ENCODE measurements at regions of chr3 and their contacts with region 1.

Region 1: DNA sequence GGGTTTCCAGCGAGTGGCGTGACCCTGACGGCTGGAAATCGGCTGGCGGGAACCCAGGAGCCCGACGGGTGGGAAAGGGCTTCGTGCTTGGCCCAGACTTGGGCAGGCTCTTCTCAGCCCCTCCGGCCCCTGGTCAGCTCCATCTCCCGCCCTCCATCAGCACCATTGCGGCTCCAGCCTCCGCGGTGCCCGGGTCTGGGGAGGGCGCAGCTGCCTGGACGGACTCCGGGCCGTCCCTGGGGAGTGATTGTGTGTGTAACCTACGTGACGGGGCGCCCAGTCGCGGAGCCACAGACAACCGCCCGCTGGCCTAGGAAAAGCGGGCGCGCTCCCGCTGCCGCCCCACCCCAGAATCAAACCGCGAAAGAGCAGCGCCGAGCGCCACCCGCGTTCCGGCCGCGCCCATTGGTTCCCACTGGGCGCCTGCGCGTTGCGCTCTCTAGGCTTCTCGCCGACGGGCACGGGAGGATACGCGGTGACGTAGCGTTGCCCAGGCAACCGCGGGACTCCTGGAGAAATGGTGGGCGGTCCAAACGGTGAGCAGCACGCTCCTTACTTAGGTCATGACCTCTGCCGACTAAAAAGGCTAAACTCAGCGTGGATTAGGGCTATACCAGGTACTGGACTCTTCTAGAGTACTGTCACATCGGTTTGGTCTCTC is at the start of gene CFAP20DC:
- DNase-seq: peak; percentile 96
- H3K4me3 ChIP-seq: peak within 1 kb of the TSS; percentile 49 to 87 (median 63)
- H3K27ac ChIP-seq: peak within 1 kb of the TSS; percentile 95
- H3K4me1 ChIP-seq: peaks cover 15% of the 10 kb centered on the region
- H3K27me3 ChIP-seq: no peaks in the 10 kb centered on the region
- CTCF ChIP-seq: peak in 1 of 2 donors; percentile 2
- total RNA-seq, gene CFAP20DC: 3.0 to 9.9 TPM

Region 2: DNA sequence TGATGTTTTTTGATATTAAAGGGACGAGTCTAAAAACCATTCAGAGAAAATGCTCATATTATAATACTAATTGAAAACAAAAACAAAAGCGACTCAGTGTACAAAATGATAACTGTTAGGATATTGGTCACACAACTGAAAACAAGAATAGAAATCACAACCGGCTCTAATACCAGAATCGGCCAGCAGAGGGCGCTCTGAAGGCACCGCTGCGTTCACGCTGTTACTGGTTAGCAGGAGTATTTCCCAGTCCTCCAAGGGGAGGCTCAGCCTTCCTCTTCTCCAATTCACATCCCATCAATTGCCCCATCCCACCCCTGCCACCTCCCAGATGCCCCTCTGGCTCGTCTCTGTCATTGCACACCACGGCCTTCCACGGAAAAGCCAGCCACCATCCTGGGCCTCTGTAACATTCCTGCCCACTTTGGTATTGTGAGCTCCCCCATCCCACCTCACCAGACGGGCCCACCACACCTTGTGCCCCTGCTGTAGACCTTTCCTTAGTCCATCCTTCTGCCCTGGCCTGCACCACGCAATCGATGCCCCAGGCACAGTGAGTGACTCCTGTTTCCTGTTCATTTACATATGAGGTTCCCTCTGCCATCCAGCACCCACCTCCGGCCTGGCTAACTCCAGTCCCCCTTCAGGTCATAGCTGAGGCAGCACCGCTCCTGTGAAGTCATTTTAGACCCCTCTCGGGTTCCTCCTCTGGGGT is 481.1 kb before region 1 on chr3:
- CTCF ChIA-PET with region 1: no interaction called
- dilution Hi-C with region 1: no loop called
- in situ Hi-C with region 1: no loop called
- intact Hi-C with region 1: loop called (anchors 5 kb)
- DNase-seq: peak; percentile 45
- H3K4me3 ChIP-seq: no peak overlapping the region
- H3K27ac ChIP-seq: no peak overlapping the region
- H3K4me1 ChIP-seq: peaks cover 21% of the 10 kb centered on the region
- H3K27me3 ChIP-seq: no peaks in the 10 kb centered on the region
- CTCF ChIP-seq: peak; percentile 87 to 88

Region 3: DNA sequence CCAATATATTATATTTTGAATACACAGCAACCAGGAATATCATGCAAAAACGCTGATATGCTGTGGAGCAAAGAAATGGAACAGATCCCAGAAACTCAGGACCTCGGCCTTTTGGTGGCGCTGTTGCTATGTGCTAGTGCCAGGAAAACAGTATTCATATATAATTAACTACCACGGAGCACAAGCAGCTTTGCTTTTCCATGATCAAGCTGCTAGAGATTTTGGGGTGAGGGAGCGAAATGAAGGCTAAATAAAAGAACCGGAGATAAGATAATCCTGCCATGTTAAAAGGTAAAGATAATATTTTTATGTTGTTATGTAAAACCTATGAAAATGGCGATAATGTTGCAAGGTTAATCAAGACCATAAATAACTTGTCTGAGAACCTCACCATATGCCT is 225.5 kb before region 1 on chr3:
- CTCF ChIA-PET with region 1: interaction called, 3 read pairs
- dilution Hi-C with region 1: no loop called
- in situ Hi-C with region 1: loop called in 1 of 2 experiments (anchors 5 kb)
- intact Hi-C with region 1: loop called (anchors 2 kb)
- DNase-seq: peak; percentile 64
- H3K4me3 ChIP-seq: no peak overlapping the region
- H3K27ac ChIP-seq: no peak overlapping the region
- H3K4me1 ChIP-seq: peaks cover 5% of the 10 kb centered on the region
- H3K27me3 ChIP-seq: no peaks in the 10 kb centered on the region
- CTCF ChIP-seq: peak; percentile 85 to 86

Region 4: DNA sequence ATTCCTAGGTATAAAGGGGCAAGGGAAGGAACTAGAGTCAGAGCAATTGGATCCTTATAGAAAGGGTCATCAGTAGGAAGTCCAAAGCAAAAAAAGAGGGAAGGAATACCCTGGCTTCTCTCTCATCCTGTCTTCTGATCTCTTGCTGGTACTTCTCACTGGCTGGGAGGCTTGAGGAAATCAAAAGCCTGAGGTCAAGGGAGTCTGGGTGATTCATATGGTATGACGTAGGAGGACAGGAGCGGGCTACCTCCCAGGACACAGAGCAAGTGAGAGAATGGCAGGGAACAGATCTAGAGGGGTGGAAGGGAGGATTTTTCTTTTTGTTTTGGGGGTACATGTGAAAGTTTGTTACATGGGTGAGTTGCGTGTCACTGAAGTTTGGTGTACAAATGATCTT is 76.0 kb before region 1 on chr3:
- CTCF ChIA-PET with region 1: no interaction called
- dilution Hi-C with region 1: no loop called
- in situ Hi-C with region 1: no loop called
- intact Hi-C with region 1: no loop called
- DNase-seq: no peak
- H3K4me3 ChIP-seq: no peak overlapping the region
- H3K27ac ChIP-seq: no peak overlapping the region
- H3K4me1 ChIP-seq: no peaks in the 10 kb centered on the region
- H3K27me3 ChIP-seq: no peaks in the 10 kb centered on the region
- CTCF ChIP-seq: no peak

Region 5: GRCh38 chr3:59006634-59007517 is 42.9 kb before region 1 on chr3:
- CTCF ChIA-PET with region 1: no interaction called
- dilution Hi-C with region 1: loop called (anchors 5 kb)
- in situ Hi-C with region 1: no loop called
- intact Hi-C with region 1: no loop called
- DNase-seq: peak; percentile 22
- H3K4me3 ChIP-seq: no peak overlapping the region
- H3K27ac ChIP-seq: no peak overlapping the region
- H3K4me1 ChIP-seq: no peaks in the 10 kb centered on the region
- H3K27me3 ChIP-seq: no peaks in the 10 kb centered on the region
- CTCF ChIP-seq: no peak

Region 6: DNA sequence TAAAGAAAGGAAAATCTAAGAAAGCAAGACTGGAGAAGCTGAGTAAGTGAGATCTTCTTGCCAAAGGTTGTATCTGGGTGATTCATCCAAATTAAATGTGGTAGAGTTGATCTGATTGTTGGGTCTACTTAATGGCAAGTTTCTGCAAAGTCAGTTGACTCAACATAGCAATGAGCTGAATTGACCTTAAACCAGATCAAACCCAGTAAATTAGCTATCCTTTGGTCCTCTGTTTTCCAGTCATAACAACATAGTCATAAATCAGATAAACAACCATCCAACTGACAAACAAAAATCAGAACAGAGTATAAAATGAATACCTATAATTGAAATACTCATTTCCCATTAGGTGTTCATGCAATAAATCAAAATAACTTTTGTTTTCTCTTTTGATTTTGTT is 142.7 kb after region 1 on chr3:
- CTCF ChIA-PET with region 1: no interaction called
- dilution Hi-C with region 1: no loop called
- in situ Hi-C with region 1: no loop called
- intact Hi-C with region 1: loop called (anchors 5 kb)
- DNase-seq: peak; percentile 94
- H3K4me3 ChIP-seq: no peak overlapping the region
- H3K27ac ChIP-seq: peak overlapping the region; percentile 78
- H3K4me1 ChIP-seq: peaks cover 23% of the 10 kb centered on the region
- H3K27me3 ChIP-seq: no peaks in the 10 kb centered on the region
- CTCF ChIP-seq: no peak